ENCODE measurements at regions of chr14 and their contacts with region 1.

Region 1: GRCh38 chr14:100900837-100901390 is 2.6 kb downstream of the RTL1 start:
- DNase-seq: peak; percentile 48
- ATAC-seq: peak; percentile 65
- H3K4me3 ChIP-seq: peak overlapping the region; percentile 56
- H3K27ac ChIP-seq: no peak overlapping the region
- H3K4me1 ChIP-seq: peaks cover 8% of the 10 kb centered on the region
- H3K27me3 ChIP-seq: peaks cover 21% of the 10 kb centered on the region
- CTCF ChIP-seq: peak; percentile 61

Region 2: DNA sequence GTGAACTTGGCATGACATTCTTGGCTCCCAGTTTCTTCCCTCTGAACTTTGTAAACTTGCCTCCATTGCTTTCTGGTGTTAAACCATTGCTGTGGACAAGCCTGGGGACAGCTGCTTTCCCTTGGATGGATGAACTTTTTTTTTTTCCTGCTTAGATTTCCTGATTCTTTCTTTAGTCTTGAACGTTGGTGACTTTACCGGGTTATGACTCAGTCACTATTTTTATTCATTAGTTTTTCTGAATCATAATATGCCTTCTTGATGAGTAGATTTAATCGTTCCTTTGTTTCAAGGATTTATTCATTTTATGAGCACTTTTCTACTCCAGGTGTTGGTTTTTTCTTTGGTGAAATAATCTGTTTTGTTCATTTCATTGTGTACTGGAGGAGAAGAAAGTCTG is 157.7 kb after region 1 on chr14:
- CTCF ChIA-PET with region 1: interaction called, 4 read pairs
- POLR2A ChIA-PET with region 1: interaction called, 8 read pairs
- intact Hi-C with region 1: loop called (anchors 5 kb)
- DNase-seq: peak; percentile 48
- ATAC-seq: peak; percentile 53
- H3K4me3 ChIP-seq: no peak overlapping the region
- H3K27ac ChIP-seq: peak overlapping the region; percentile 33
- H3K4me1 ChIP-seq: peaks cover 19% of the 10 kb centered on the region
- H3K27me3 ChIP-seq: no peaks in the 10 kb centered on the region
- CTCF ChIP-seq: no peak